ENCODE measurements at regions of chr2 and their contacts with region 1.

Region 1: GRCh38 chr2:188524519-188525113 is 232.9 kb downstream of the GULP1 start:
- DNase-seq: no peak
- H3K4me3 Mint-ChIP-seq: no peak overlapping the region
- H3K27ac Mint-ChIP-seq: no peak overlapping the region
- H3K4me1 Mint-ChIP-seq: no peaks in the 10 kb centered on the region
- H3K27me3 Mint-ChIP-seq: no peaks in the 10 kb centered on the region

Region 2: DNA sequence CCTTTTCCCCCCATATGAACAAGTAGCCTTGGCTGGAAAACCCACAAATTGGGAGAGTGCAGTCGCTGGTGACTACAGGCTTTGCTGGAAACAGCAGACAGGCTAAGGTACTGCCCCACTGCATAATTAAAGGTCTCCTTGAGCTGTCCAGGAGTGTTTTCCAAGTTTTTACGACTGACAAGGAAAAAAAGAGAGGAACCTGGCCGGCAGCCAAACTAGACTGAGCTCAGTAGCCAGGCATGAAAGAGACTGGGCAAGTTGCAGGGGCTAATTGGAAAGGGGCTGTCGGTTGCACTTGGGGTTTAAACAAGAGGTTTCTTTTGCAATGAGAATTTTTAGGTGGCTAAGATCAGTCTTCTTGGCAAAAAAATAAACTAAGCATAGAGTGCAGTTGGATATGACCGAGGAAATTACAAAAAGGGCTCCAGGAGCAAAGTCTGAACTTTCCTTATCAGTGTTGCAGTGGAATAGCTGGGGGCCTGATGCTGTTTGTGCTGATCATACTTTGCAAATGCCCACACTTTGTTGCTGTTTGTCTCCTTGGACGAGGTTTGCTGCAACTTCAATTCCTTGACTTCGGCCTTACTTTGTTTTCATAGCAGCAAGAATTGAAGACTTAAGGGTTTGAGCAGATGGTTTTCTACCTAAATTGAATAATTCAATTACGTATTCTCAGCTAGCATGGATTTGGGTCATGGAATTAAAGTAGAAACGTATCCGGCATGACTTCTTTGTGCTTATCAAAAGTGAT is 230.8 kb before region 1 on chr2:
- intact Hi-C with region 1: no loop called
- DNase-seq: no peak
- H3K4me3 Mint-ChIP-seq: no peak overlapping the region
- H3K27ac Mint-ChIP-seq: no peak overlapping the region
- H3K4me1 Mint-ChIP-seq: peaks cover 8% of the 10 kb centered on the region
- H3K27me3 Mint-ChIP-seq: peaks cover 39% of the 10 kb centered on the region

Region 3: GRCh38 chr2:188598551-188598950 is 73.9 kb after region 1 on chr2:
- intact Hi-C with region 1: no loop called
- DNase-seq: no peak
- H3K4me3 Mint-ChIP-seq: no peak overlapping the region
- H3K27ac Mint-ChIP-seq: no peak overlapping the region
- H3K4me1 Mint-ChIP-seq: no peaks in the 10 kb centered on the region
- H3K27me3 Mint-ChIP-seq: no peaks in the 10 kb centered on the region

Region 4: GRCh38 chr2:188984680-188985079 is 460.1 kb after region 1 on chr2:
- intact Hi-C with region 1: loop called (anchors 5 kb)
- DNase-seq: no peak
- H3K4me3 Mint-ChIP-seq: no peak overlapping the region
- H3K27ac Mint-ChIP-seq: no peak overlapping the region
- H3K4me1 Mint-ChIP-seq: peaks cover 2% of the 10 kb centered on the region
- H3K27me3 Mint-ChIP-seq: no peaks in the 10 kb centered on the region

Region 5: DNA sequence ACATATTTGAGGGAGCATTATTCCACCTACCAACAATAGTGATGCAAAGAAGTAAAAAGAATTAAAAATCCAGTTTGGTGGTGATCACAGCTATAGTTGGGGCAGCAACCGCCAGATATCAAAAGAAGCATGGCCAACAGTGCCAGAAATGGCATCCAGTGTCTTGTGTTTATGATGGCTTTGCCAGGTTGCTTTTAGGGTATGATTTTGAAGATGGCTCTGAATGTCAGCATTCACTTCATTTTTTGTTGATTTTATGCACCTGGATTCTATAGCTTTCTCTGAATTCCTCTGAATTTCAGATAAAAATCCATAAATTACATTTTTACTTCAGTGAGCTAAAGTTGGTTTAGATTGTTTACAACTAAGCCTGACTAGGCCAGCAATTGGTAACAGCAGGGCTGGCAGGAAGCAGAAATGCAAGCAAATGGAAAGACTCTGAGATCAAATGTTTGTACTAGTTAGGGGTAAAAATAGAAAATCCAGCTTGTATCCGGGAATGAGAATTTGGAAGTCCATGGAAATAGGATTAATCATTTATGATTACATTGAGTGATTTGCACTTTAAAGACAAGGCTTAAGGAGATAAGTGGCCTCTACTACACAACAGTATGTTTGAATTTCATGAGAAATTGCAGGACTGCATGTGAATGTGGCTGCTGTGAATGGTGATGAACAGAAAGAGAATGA is 490.0 kb after region 1 on chr2:
- intact Hi-C with region 1: no loop called
- DNase-seq: no peak
- H3K4me3 Mint-ChIP-seq: no peak overlapping the region
- H3K27ac Mint-ChIP-seq: no peak overlapping the region
- H3K4me1 Mint-ChIP-seq: no peaks in the 10 kb centered on the region
- H3K27me3 Mint-ChIP-seq: no peaks in the 10 kb centered on the region

Region 6: DNA sequence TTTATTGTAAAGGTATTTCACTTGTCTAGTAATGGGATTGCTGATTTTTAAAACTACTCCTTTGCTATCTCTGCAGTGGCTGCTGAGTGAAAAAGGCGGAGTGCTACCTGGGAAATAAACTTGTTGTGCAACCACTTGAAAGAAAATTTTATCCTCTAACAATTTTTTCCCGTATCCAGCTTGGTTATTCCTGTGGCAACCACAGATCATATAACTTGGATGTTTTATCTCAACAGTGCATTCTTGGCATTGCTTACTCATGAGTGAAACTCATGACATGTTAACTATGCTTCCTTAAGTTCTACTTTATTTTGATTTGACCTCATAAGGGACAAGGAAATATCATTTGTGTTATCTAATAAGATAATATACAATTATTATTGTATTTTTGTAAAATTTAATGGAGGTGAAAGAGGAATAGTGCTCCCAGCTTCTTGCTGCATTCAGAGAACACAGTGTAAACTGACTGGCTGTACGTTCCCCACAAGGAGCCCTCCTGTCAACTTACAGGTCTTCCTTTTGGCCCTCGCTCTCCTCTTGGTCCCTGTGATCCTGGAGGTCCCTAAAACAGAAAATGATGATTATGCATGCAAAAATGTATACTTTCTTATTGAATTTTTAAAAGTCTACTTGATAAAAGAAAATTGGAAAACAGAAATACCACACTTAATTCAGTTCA is 572.3 kb after region 1 on chr2:
- intact Hi-C with region 1: loop called (anchors 5 kb)
- DNase-seq: no peak
- H3K4me3 Mint-ChIP-seq: no peak overlapping the region
- H3K27ac Mint-ChIP-seq: no peak overlapping the region
- H3K4me1 Mint-ChIP-seq: no peaks in the 10 kb centered on the region
- H3K27me3 Mint-ChIP-seq: no peaks in the 10 kb centered on the region

Region 7: GRCh38 chr2:189412330-189412953 is 887.8 kb after region 1 on chr2:
- intact Hi-C with region 1: loop called (anchors 1 kb)
- DNase-seq: peak; percentile 12
- H3K4me3 Mint-ChIP-seq: no peak overlapping the region
- H3K27ac Mint-ChIP-seq: no peak overlapping the region
- H3K4me1 Mint-ChIP-seq: peaks cover 8% of the 10 kb centered on the region
- H3K27me3 Mint-ChIP-seq: no peaks in the 10 kb centered on the region